Caco-2 (cell line): ENCODE measurements at regions of chr6 and their contacts with region 1.

Region 1: DNA sequence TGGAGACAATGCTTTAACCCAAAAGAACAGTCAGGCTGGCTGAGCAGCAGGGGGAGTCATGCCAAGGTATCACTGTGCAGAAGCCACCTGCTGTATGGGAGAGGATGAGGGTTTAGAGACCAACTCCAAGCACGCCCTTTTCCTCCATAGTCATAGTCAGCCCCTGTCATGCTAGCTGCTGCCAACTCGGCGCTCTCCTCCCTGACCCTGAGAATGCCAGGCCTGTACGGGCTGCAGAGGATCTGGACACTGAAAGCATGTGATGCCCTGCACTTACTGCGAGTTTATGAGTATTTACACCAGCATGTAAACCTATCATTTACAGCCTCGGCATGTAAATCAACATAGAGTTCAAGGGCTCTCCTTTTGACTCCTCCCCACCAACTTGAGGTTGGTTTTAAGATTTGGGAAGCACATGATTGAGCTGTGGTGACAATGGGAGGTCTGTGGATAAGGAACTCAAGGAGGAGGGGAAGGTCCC is 11.7 kb upstream of the SCUBE3 start:
- DNase-seq: no peak
- H3K4me3 ChIP-seq: no peak overlapping the region
- H3K4me3 Mint-ChIP-seq: no peak overlapping the region
- H3K27ac Mint-ChIP-seq: no peak overlapping the region
- H3K4me1 ChIP-seq: peaks cover 7% of the 10 kb centered on the region; the same call in 1 of the 2 replicates
- H3K4me1 Mint-ChIP-seq: peaks cover 14% of the 10 kb centered on the region
- H3K27me3 ChIP-seq: no peaks in the 10 kb centered on the region
- H3K27me3 Mint-ChIP-seq: no peaks in the 10 kb centered on the region
- CTCF ChIP-seq: no peak

Region 2: GRCh38 chr6:35146453-35146852 is 55.7 kb before region 1 on chr6:
- CTCF ChIA-PET with region 1: interaction called, 10 read pairs
- POLR2A ChIA-PET with region 1: no interaction called
- intact Hi-C with region 1: loop called (anchors 1 kb)
- DNase-seq: peak; percentile 60 to 73
- H3K4me3 ChIP-seq: no peak overlapping the region
- H3K4me3 Mint-ChIP-seq: no peak overlapping the region
- H3K27ac Mint-ChIP-seq: no peak overlapping the region
- H3K4me1 ChIP-seq: peaks cover 8% of the 10 kb centered on the region
- H3K4me1 Mint-ChIP-seq: peaks cover 26% of the 10 kb centered on the region
- H3K27me3 ChIP-seq: no peaks in the 10 kb centered on the region
- H3K27me3 Mint-ChIP-seq: no peaks in the 10 kb centered on the region
- CTCF ChIP-seq: peak; percentile 63 to 83

Region 3: DNA sequence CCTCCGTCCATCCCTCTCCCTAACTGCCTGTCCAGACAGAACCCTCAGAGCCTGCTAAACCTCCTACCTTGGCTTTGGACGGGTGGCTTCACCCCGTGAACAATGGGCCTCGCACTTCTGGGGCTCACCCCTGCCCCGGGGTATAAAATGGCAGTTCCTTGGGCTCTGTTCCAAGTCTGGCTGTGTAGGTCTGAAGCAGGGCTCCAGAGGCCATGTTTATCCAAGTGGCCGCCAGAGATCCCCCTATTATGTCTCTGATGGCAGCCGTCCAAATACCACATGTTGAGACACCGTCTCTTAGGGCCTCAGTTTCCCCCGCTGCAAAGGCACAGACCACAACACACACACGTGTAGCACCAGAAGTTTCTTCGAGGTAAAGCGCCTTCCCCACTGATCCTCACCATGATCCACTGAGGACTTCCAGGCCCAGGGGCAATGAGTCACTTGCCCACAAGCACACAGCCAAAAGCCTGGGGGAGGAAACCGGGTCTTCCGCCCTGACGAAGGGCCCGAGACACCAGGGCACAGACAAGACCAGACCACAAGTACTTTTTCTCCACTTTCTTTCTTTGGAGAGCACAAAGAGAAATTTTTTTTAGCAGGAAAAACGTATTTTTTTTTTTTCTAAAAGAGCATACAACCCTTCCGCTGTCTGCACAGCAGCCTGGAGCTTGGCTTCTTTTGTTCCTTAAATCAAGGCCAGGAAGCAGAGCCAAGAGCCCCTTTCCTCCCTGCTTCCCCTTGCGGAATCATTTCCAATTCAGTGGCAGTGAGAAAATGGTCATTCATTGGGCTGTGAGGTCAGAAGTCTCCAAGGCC is 1625.4 kb after region 1 on chr6:
- CTCF ChIA-PET with region 1: no interaction called
- POLR2A ChIA-PET with region 1: no interaction called
- intact Hi-C with region 1: no loop called
- DNase-seq: no peak
- H3K4me3 ChIP-seq: no peak overlapping the region
- H3K4me3 Mint-ChIP-seq: no peak overlapping the region
- H3K27ac Mint-ChIP-seq: no peak overlapping the region
- H3K4me1 ChIP-seq: peaks cover 20% of the 10 kb centered on the region
- H3K4me1 Mint-ChIP-seq: peaks cover 5% of the 10 kb centered on the region
- H3K27me3 ChIP-seq: no peaks in the 10 kb centered on the region
- H3K27me3 Mint-ChIP-seq: no peaks in the 10 kb centered on the region
- CTCF ChIP-seq: no peak